PC-9 (cell line): ENCODE measurements at regions of chr3 and their contacts with region 1.

Region 1: DNA sequence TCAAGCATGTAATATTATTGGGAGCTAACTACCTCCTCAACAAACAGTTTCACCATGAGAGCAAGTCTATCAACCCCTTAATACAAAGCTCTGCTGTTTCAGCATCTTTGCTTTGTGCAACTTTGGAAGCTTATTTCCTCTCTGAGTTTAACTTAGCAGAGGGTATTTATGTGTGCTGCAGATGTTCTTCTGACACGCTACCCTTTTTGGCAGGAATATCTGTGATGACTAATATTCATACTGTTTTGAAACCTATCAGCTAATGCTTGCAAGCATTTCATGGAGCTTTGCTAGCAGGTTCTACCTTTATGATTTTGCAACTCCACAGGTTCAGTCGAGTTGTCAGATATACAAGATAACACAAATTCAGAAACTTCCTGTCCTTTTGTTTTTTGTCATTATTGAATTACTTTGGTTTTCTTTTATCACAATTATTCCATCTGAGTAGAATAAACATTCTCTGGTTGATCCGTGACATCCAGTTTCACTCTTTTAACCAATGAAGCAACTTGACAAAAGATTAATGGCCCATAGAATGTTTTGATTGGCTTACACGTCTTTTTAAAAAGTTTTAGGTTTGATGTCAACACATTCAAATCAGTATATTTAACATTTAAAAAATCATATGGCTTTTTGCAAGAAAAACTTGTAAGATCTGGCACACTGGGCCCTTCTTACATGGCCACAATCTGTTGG is 1.7 kb upstream of the SLC9A9 start:
- DNase-seq: peak in 1 of 2 experiments; percentile 25
- H3K4me3 ChIP-seq: no peak overlapping the region
- H3K27ac ChIP-seq: no peak overlapping the region
- H3K4me1 ChIP-seq: 0 out of 2 replicates have a peak, but pooled peaks cover 10% of the 10 kb centered on the region
- H3K27me3 ChIP-seq: no peaks in the 10 kb centered on the region
- CTCF ChIP-seq: no peak

Region 2: GRCh38 chr3:143831208-143831607 is 18.8 kb before region 1 on chr3:
- CTCF ChIA-PET with region 1: no interaction called
- POLR2A ChIA-PET with region 1: no interaction called
- intact Hi-C with region 1: loop called (anchors 1 kb)
- DNase-seq: peak; percentile 14 to 63
- H3K4me3 ChIP-seq: no peak overlapping the region; the same call in 1 of the 2 replicates
- H3K27ac ChIP-seq: peak overlapping the region; percentile 67
- H3K4me1 ChIP-seq: peaks cover 35% of the 10 kb centered on the region
- H3K27me3 ChIP-seq: no peaks in the 10 kb centered on the region
- CTCF ChIP-seq: no peak